ENCODE measurements at regions of chr18 and their contacts with region 1.

Region 1: GRCh38 chr18:33062913-33063312 is 290.1 kb upstream of the KLHL14 start:
- DNase-seq: no peak
- H3K4me3 ChIP-seq: no peak overlapping the region
- H3K27ac ChIP-seq: no peak overlapping the region
- H3K4me1 ChIP-seq: no peaks in the 10 kb centered on the region
- H3K27me3 ChIP-seq: no peaks in the 10 kb centered on the region
- CTCF ChIP-seq: no peak
- POLR2A ChIP-seq: no peak

Region 2: DNA sequence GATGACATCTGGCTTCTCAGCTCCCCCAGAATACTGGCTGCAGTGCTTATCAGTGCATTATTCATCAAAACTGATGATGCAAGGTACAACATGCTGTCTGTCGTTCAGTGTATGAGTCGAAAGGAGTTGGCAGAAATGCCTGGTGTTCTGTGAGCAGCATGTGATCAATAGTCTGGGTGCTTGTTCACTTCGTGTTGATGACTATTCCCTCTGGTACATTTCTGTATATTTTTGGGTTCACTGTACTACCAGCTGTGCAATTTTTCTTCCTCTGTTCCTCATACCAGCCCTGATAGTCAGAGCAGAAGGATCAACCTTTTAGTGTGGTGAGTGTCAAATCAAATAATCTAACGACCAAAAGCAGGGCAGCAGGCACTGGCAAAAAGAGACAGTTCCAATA is 231.1 kb before region 1 on chr18:
- CTCF ChIA-PET with region 1: no interaction called
- POLR2A ChIA-PET with region 1: no interaction called
- dilution Hi-C with region 1: no loop called
- intact Hi-C with region 1: no loop called
- DNase-seq: no peak
- H3K4me3 ChIP-seq: no peak overlapping the region
- H3K27ac ChIP-seq: no peak overlapping the region
- H3K4me1 ChIP-seq: no peaks in the 10 kb centered on the region
- H3K27me3 ChIP-seq: no peaks in the 10 kb centered on the region
- CTCF ChIP-seq: no peak
- POLR2A ChIP-seq: no peak

Region 3: GRCh38 chr18:32937007-32937540 is 125.8 kb before region 1 on chr18:
- CTCF ChIA-PET with region 1: no interaction called
- POLR2A ChIA-PET with region 1: no interaction called
- dilution Hi-C with region 1: no loop called
- intact Hi-C with region 1: loop called (anchors 10 kb)
- DNase-seq: no peak
- H3K4me3 ChIP-seq: no peak overlapping the region
- H3K27ac ChIP-seq: no peak overlapping the region
- H3K4me1 ChIP-seq: no peaks in the 10 kb centered on the region
- H3K27me3 ChIP-seq: no peaks in the 10 kb centered on the region
- CTCF ChIP-seq: no peak
- POLR2A ChIP-seq: no peak

Region 4: DNA sequence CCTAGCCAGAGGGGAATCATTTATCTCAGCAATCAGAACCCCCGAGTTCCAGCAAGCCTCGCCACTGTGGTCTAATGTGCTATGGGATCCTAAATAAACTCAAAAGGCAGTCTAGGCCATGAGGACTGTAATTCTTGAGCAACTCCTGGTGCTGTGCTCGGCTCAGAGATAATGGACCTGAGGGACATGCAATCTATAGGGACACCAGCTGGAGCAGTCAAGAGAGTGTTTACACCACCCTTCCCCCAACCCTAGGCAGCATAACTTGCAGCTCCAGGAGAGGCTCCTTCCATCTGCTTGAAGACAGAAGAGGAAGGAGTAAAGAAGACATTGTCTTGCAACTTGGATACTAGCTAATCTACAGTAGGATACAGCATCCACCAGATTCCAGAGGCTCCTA is 64.6 kb before region 1 on chr18:
- CTCF ChIA-PET with region 1: no interaction called
- POLR2A ChIA-PET with region 1: no interaction called
- dilution Hi-C with region 1: no loop called
- intact Hi-C with region 1: no loop called
- DNase-seq: no peak
- H3K4me3 ChIP-seq: no peak overlapping the region
- H3K27ac ChIP-seq: no peak overlapping the region
- H3K4me1 ChIP-seq: no peaks in the 10 kb centered on the region
- H3K27me3 ChIP-seq: no peaks in the 10 kb centered on the region
- CTCF ChIP-seq: no peak
- POLR2A ChIP-seq: no peak